ENCODE measurements at regions of chr7 and their contacts with region 1.

Region 1: GRCh38 chr7:23357190-23358093 is 58.3 kb downstream of the MALSU1 start:
- DNase-seq: no peak
- ATAC-seq: peak; percentile 87
- H3K4me3 Mint-ChIP-seq: no peak overlapping the region
- H3K27ac Mint-ChIP-seq: no peak overlapping the region
- H3K4me1 Mint-ChIP-seq: peaks cover 20% of the 10 kb centered on the region
- H3K27me3 Mint-ChIP-seq: no peaks in the 10 kb centered on the region
- CTCF ChIP-seq: peak; percentile 22

Region 2: GRCh38 chr7:23373151-23374004 is 15.9 kb after region 1 on chr7:
- CTCF ChIA-PET with region 1: interaction called, 11 read pairs
- POLR2A ChIA-PET with region 1: interaction called, 3 read pairs
- intact Hi-C with region 1: loop called (anchors 1 kb)
- DNase-seq: peak; percentile 28
- ATAC-seq: peak; percentile 69
- H3K4me3 Mint-ChIP-seq: peak overlapping the region; percentile 68
- H3K27ac Mint-ChIP-seq: peak overlapping the region; percentile 94
- H3K4me1 Mint-ChIP-seq: peaks cover 70% of the 10 kb centered on the region
- H3K27me3 Mint-ChIP-seq: no peaks in the 10 kb centered on the region
- CTCF ChIP-seq: no peak

Region 3: GRCh38 chr7:23431702-23432199 is 74.3 kb after region 1 on chr7:
- CTCF ChIA-PET with region 1: interaction called, 20 read pairs
- POLR2A ChIA-PET with region 1: no interaction called
- intact Hi-C with region 1: loop called (anchors 2 kb)
- DNase-seq: no peak
- ATAC-seq: no peak
- H3K4me3 Mint-ChIP-seq: no peak overlapping the region
- H3K27ac Mint-ChIP-seq: no peak overlapping the region
- H3K4me1 Mint-ChIP-seq: no peaks in the 10 kb centered on the region
- H3K27me3 Mint-ChIP-seq: peaks cover 5% of the 10 kb centered on the region
- CTCF ChIP-seq: no peak

Region 4: DNA sequence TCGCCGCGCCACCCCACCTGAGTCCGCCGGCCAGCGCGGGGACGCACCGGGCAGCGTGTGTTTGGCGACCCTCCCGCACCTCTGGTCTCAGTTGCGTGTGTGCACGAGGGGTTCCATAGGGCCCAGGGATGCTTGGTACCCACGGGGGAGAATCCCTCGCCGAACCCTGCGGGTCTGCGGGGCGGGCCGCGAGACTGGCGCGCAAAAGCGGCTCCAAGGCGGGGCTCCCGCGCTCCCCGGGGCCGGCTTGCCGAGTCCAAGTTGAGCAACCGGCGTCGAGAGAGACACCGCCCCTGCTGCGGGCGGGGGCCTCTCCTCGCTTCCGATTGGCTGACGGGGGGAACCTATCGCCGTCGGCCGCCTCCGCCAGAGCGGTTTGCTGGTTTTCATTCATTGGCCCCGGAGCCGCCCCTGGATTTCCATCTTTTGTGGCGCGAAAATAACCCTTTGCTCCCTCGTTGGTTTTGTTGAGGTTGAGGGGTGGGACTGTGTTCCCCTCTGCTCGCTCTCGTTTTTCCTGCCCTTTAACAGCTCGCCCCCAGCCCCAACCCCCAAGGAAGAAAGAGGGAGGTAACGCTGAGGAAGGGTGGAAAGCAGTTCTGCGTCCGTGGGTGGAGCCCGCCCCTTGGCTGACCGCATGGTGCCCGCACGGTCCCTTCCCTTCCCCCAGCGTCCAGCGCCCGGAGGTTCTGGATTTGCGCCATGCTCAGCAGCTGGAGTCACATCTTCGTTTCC is 116.8 kb after region 1 on chr7:
- CTCF ChIA-PET with region 1: interaction called, 6 read pairs
- POLR2A ChIA-PET with region 1: interaction called, 3 read pairs
- intact Hi-C with region 1: loop called (anchors 1 kb)
- DNase-seq: peak; percentile 62
- ATAC-seq: peak; percentile 67
- H3K4me3 Mint-ChIP-seq: peak overlapping the region; percentile 77
- H3K27ac Mint-ChIP-seq: peak overlapping the region; percentile 41
- H3K4me1 Mint-ChIP-seq: peaks cover 30% of the 10 kb centered on the region
- H3K27me3 Mint-ChIP-seq: peaks cover 49% of the 10 kb centered on the region
- CTCF ChIP-seq: no peak

Region 5: GRCh38 chr7:23546897-23547572 is 189.6 kb after region 1 on chr7:
- CTCF ChIA-PET with region 1: interaction called, 42 read pairs
- POLR2A ChIA-PET with region 1: no interaction called
- intact Hi-C with region 1: loop called (anchors 1 kb)
- DNase-seq: peak; percentile 40
- ATAC-seq: peak; percentile 91
- H3K4me3 Mint-ChIP-seq: no peak overlapping the region
- H3K27ac Mint-ChIP-seq: no peak overlapping the region
- H3K4me1 Mint-ChIP-seq: peaks cover 18% of the 10 kb centered on the region
- H3K27me3 Mint-ChIP-seq: no peaks in the 10 kb centered on the region
- CTCF ChIP-seq: no peak

Measured in activated B cell treated with CpG ODN at 0.5 μM for 24 hours (primary cell).